ENCODE measurements at regions of chr14 and their contacts with region 1.

Region 1: DNA sequence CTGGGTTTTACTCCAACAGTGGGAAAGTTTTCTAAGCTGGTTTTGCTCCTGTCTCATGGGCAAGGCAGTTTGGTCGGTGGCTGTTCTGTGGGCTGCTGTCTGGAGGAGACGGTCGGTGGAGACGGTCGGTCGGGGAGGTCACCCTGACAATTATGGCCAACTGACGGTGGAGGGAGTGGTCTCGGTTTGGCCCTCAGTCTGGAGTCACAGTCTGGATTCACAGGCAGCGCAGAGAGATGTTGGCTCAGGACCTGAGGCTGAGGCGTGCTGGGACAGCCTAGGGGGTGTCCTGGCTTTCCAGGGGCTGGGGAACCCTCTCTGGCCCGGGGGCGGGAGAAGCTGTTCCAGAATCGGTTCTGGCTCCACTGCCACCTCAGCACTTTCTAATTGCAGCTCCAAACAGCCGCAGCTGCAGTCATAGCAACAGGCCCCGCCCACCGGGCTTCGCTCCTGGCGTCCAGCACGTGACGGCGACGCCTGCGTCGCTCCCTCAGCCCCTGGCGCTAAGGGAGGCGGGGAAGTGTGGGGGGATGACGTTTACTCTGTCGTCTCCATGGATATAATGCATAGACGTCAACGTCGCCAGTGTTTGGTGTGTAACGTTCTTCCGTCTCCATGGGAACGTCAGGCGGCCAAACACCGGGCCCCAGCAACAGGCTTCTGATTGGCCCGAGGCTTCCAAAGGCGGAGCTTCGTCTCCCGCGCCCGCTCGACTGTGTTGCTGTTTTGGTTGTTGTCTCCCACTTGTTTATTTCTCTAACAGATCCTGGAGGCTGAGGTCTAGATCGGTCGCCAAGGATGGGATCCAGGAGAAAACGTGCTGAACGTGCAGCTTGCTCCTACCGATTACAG is 19.8 kb upstream of the FOS start:
- DNase-seq: peak; percentile 98
- H3K4me3 ChIP-seq: peak overlapping the region; percentile 57
- CTCF ChIP-seq: no peak

Region 2: GRCh38 chr14:75277000-75277801 is 18.4 kb after region 1 on chr14:
- CTCF ChIA-PET with region 1: no interaction called
- POLR2A ChIA-PET with region 1: interaction called, 12 read pairs
- DNase-seq: no peak
- H3K4me3 ChIP-seq: peak overlapping the region; percentile 68
- CTCF ChIP-seq: no peak